SK-N-SH (cell line): ENCODE measurements at regions of chr3 and their contacts with region 1.

Region 1: DNA sequence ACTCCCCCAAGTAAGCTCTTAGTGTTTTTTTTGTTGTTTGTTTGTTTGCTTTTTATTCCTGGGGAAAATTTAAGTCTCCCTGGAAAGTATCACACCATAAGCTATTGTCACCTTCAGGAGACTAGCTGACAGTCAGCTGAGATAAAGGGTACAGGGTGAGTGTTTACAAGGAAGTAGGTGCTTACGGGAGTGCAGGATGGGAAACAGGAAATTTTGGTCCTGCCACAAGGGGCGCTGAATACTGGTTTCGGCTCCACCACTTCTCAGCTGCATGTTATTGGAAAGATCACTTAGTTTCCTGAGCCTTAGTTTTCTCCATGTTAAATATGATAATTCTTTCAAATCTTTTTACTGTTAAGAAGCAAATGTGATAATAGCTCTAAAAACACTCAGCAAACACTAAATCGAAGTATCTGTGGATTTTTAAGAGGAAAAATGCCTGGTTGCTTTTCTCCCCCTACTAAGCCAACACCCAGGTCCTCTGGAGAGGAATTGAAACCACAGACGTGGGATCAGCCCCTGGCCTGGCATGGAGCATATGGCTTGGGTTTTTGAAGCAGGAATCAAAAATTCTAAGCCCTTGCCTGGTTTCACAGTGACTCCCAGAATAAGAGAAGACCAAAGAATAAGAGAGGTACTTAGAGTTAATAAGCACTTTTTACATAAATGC is 90.7 kb downstream of the SCN11A start:
- DNase-seq: peak; percentile 56
- H3K4me3 ChIP-seq: no peak overlapping the region; a peak in 1 of 4 replicates
- H3K27ac ChIP-seq: no peak overlapping the region
- H3K4me1 ChIP-seq: peaks cover 0 to 9% of the 10 kb centered on the region in 2 experiments; a peak in 1 of 4 replicates
- H3K27me3 ChIP-seq: no peaks in the 10 kb centered on the region
- CTCF ChIP-seq: peak; percentile 72
- EP300 ChIP-seq: no peak
- RAD21 ChIP-seq: peak; percentile 42

Region 2: DNA sequence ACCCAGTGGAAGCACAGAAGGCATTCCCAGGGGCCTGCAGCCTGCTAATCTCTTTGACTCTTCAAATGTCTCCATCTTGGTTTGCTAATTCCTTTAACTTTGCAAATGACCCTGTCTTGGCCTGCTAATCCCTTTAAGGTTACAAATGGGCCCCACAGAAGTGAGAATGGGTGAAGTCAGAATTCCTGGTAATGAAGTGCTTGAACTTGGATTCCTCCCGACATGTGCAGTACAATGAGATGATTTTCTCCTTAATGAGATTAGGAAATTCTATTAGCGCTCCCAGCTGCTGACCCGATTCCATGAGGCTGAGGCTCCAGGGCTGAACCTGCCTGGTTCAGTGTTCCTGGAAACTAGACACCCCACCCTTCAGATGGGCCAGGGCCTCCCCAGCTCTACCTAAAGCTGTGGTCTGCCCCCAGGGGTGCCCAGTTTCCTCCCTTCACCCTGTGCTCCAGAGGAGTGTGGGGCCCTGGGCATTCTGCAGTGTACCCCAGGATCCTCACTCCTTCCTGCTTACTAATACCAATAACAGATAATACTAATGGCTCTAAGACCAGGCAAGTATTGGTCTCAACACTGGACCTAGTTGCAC is 359.0 kb before region 1 on chr3:
- CTCF ChIA-PET with region 1: no interaction called
- POLR2A ChIA-PET with region 1: no interaction called
- DNase-seq: peak; percentile 75
- H3K4me3 ChIP-seq: no peak overlapping the region
- H3K27ac ChIP-seq: peak overlapping the region in 1 of 2 experiments; percentile 64; a peak in 2 of 4 replicates
- H3K4me1 ChIP-seq: peaks cover 0 to 15% of the 10 kb centered on the region in 2 experiments; a peak in 1 of 4 replicates
- H3K27me3 ChIP-seq: no peaks in the 10 kb centered on the region
- CTCF ChIP-seq: no peak
- EP300 ChIP-seq: peak in 1 of 2 experiments; percentile 60; a peak in 1 of 4 replicates
- RAD21 ChIP-seq: no peak; the same call in 1 of the 2 replicates

Region 3: GRCh38 chr3:38980938-38981337 is 19.9 kb after region 1 on chr3:
- CTCF ChIA-PET with region 1: interaction called, 11 read pairs
- POLR2A ChIA-PET with region 1: no interaction called
- DNase-seq: no peak
- H3K4me3 ChIP-seq: no peak overlapping the region
- H3K27ac ChIP-seq: no peak overlapping the region
- H3K4me1 ChIP-seq: peaks cover 0 to 5% of the 10 kb centered on the region in 2 experiments; a peak in 2 of 4 replicates
- H3K27me3 ChIP-seq: no peaks in the 10 kb centered on the region
- CTCF ChIP-seq: no peak
- EP300 ChIP-seq: no peak
- RAD21 ChIP-seq: no peak

Region 4: GRCh38 chr3:39138804-39139415 is 177.8 kb after region 1 on chr3:
- CTCF ChIA-PET with region 1: no interaction called
- POLR2A ChIA-PET with region 1: no interaction called
- DNase-seq: no peak
- H3K4me3 ChIP-seq: no peak overlapping the region
- H3K27ac ChIP-seq: peak overlapping the region; percentile 34 to 37; a peak in 2 of 4 replicates
- H3K4me1 ChIP-seq: peaks cover 9 to 42% of the 10 kb centered on the region in 2 experiments
- H3K27me3 ChIP-seq: no peaks in the 10 kb centered on the region
- CTCF ChIP-seq: no peak
- EP300 ChIP-seq: no peak
- RAD21 ChIP-seq: no peak